Activated CD8-positive, alpha-beta T cell treated with anti-CD3 and anti-CD28 coated beads for 36 hours (primary cell): ENCODE measurements at regions of chr22 and their contacts with region 1.

Region 1: DNA sequence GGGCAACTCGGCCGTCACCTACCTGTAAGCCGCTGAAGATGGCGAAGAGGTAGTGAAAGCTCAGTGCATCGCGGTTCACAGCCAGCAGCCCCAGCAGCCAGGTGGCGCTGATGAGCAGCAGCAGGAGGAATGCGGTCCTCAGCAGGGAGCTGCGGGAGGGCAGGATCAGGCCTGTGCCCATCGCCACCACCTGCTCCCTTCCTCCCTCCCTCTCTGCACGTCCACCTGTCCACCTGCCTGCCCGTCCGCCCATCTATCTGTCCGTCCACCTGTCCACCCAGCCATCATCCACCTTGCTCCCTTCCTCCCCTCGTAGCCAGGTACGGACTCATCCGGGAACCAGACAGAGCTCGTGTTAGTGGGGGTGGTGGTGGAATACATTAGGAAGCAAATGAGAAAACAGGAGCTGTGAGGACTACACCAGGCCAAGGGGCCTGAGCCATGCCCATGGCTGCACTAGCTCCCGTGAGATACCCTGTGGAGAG is 32.2 kb downstream of the TRMU start:
- DNase-seq: peak; percentile 85
- ATAC-seq: peak; percentile 76
- H3K4me3 Mint-ChIP-seq: no peak overlapping the region
- H3K27ac Mint-ChIP-seq: no peak overlapping the region
- H3K4me1 Mint-ChIP-seq: peaks cover 22% of the 10 kb centered on the region
- H3K27me3 Mint-ChIP-seq: peaks cover 2% of the 10 kb centered on the region
- CTCF ChIP-seq: peak; percentile 84

Region 2: DNA sequence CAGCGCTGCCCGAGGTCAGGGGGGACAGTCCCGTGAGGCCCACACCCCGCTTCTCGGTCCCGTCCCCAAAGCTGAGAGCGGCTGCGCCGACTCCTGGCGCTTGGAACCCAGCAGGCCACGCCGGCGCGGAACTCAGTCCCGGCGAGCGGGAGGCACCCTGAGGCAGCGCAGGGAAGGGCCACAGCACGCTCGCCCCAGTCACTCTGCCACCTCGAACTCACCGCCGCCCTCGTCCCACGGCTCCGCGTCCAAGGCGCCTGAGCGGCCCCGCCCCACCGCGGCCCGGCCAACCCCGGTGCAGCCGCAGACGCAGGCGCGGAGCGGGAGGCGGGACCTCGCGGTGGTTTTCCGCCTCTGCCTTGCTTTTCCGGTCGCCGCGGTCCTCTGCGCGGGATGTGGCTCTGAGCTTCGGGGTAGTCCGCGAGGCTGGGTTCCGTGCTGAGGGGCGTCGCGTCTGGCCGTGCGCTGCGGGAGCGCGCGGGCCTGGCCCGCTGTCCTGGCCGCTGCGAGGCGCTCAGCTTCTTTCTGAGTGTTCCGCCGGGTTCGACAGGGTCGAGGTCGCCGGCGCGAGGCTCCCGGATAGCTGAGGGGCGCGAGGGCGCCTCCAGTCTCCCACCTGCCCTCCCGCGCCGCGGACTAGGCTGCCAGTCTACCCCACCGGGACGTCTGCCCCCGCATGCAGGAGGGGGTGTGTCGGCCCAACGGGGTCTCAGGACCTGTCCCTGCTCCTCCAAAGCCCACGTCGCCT is 117.5 kb before region 1 on chr22 and contains the start of gene CDPF1:
- CTCF ChIA-PET with region 1: no interaction called
- POLR2A ChIA-PET with region 1: no interaction called
- intact Hi-C with region 1: no loop called
- DNase-seq: peak; percentile 89
- ATAC-seq: peak; percentile 91
- H3K4me3 Mint-ChIP-seq: peak within 1 kb of the TSS; percentile 81
- H3K27ac Mint-ChIP-seq: peak within 1 kb of the TSS; percentile 90
- H3K4me1 Mint-ChIP-seq: peaks cover 25% of the 10 kb centered on the region
- H3K27me3 Mint-ChIP-seq: no peaks in the 10 kb centered on the region
- CTCF ChIP-seq: no peak
- total RNA-seq, gene CDPF1: 11.9 to 12.1 TPM

Region 3: GRCh38 chr22:46432164-46433068 is 64.7 kb after region 1 on chr22:
- CTCF ChIA-PET with region 1: interaction called, 11 read pairs
- POLR2A ChIA-PET with region 1: no interaction called
- intact Hi-C with region 1: no loop called
- DNase-seq: peak; percentile 53
- ATAC-seq: peak; percentile 86
- H3K4me3 Mint-ChIP-seq: peak overlapping the region; percentile 64
- H3K27ac Mint-ChIP-seq: peak overlapping the region; percentile 91
- H3K4me1 Mint-ChIP-seq: peaks cover 6% of the 10 kb centered on the region
- H3K27me3 Mint-ChIP-seq: no peaks in the 10 kb centered on the region
- CTCF ChIP-seq: no peak

Region 4: GRCh38 chr22:46471901-46472721 is 104.4 kb after region 1 on chr22:
- CTCF ChIA-PET with region 1: no interaction called
- POLR2A ChIA-PET with region 1: no interaction called
- intact Hi-C with region 1: no loop called
- DNase-seq: no peak
- ATAC-seq: no peak
- H3K4me3 Mint-ChIP-seq: no peak overlapping the region
- H3K27ac Mint-ChIP-seq: no peak overlapping the region
- H3K4me1 Mint-ChIP-seq: peaks cover 5% of the 10 kb centered on the region
- H3K27me3 Mint-ChIP-seq: peaks cover 4% of the 10 kb centered on the region
- CTCF ChIP-seq: no peak

Region 5: GRCh38 chr22:46542011-46542985 is 174.5 kb after region 1 on chr22:
- CTCF ChIA-PET with region 1: interaction called, 46 read pairs
- POLR2A ChIA-PET with region 1: no interaction called
- intact Hi-C with region 1: loop called (anchors 2 kb)
- DNase-seq: peak; percentile 79
- ATAC-seq: peak; percentile 99
- H3K4me3 Mint-ChIP-seq: no peak overlapping the region
- H3K27ac Mint-ChIP-seq: no peak overlapping the region
- H3K4me1 Mint-ChIP-seq: peaks cover 13% of the 10 kb centered on the region
- H3K27me3 Mint-ChIP-seq: peaks cover 36% of the 10 kb centered on the region
- CTCF ChIP-seq: peak; percentile 91